ENCODE measurements at regions of chr4 and their contacts with region 1.

Region 1: GRCh38 chr4:144818141-144818540 is 172.2 kb downstream of the HHIP start:
- DNase-seq: no peak

Region 2: DNA sequence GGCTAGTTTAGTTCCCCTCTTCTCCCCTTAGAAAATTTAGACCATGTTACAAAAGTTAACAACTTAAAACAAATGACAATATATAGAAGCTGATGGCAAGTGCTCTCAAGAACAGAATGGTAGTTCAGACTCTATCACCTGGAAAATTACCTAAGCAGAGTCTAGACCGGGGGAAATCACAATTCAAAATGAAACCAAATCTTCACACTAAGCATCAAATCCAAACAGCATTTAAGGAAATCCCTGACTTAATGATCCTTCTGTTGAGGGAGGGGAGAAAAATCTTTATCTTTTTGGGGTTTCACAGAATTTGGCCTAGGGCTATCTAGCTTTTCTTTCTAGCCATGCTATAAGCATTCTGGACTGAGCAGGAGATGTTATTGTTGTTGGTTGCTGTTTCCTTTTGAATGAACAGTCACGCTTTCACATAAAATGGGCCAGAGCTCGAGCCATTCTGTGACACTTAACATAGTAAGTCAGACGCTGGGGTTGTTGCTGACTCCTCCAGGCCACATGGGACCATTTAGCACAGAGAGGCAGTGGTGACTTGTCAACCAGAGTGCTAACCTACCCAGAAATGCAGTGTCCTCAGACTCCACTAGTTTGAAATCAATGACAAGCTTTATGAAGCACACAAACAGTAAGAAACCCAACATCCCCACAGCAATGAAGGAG is 1341.4 kb after region 1 on chr4:
- intact Hi-C with region 1: loop called in 1 of 2 experiments (anchors 5 kb)
- DNase-seq: no peak